PC-9 (cell line): ENCODE measurements at regions of chr7 and their contacts with region 1.

Region 1: GRCh38 chr7:74449809-74450397 is 3.8 kb upstream of the GTF2IRD1 start:
- DNase-seq: peak in 1 of 2 experiments; percentile 45
- H3K4me3 ChIP-seq: no peak overlapping the region
- H3K27ac ChIP-seq: no peak overlapping the region
- H3K4me1 ChIP-seq: peaks cover 7% of the 10 kb centered on the region
- H3K27me3 ChIP-seq: no peaks in the 10 kb centered on the region
- CTCF ChIP-seq: peak; percentile 74

Region 2: DNA sequence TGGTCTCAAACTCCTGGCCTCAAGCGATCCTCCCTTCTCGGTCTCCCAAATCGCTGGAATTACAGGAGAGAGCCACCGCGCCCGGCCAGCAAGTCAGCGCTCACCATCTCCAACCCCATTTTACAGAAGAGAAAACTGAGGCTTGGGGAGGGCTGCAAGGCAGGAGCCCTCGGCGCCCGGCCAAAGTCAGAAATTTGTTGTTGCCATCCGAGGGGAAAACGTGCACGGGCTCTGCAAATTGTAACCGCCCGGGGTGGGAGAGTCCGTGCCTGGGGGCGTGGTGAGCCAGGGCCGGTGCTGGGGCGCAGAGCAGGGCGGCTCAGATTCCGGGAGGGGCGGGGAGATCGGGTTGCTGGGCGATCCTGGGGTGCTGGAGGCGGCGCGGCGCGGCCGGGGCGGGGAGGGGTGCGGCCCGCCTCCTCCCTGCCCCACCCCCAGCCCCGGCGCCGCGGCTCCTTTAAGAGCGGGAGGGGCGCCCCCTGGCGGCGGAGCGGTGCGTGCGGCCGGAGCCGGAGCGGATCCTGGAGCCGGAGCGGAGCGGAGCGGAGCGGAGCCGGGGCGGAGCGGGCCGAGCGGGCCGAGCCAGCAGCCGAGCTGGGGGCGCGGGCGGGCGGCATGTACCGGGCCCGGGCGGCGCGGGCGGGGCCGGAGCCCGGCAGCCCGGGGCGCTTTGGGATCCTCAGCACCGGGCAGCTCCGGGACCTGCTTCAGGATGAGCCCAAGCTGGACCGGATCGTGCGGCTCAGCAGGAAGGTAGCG is 782.4 kb before region 1 on chr7 and contains the start of gene VPS37D:
- CTCF ChIA-PET with region 1: no interaction called
- POLR2A ChIA-PET with region 1: no interaction called
- intact Hi-C with region 1: no loop called
- DNase-seq: peak; percentile 69 to 97
- H3K4me3 ChIP-seq: peak within 1 kb of the TSS; percentile 40; the same call in 1 of the 2 replicates
- H3K27ac ChIP-seq: no peak within 1 kb of the TSS
- H3K4me1 ChIP-seq: 0 out of 2 replicates have a peak, but pooled peaks cover 4% of the 10 kb centered on the region
- H3K27me3 ChIP-seq: no peaks in the 10 kb centered on the region
- CTCF ChIP-seq: peak; percentile 50; the same call in 1 of the 2 replicates
- total RNA-seq, gene VPS37D: 8.3 and 12.4 TPM in 2 replicates

Region 3: GRCh38 chr7:74395745-74396311 is 54.1 kb before region 1 on chr7:
- CTCF ChIA-PET with region 1: no interaction called
- POLR2A ChIA-PET with region 1: no interaction called
- intact Hi-C with region 1: no loop called
- DNase-seq: no peak
- H3K4me3 ChIP-seq: no peak overlapping the region
- H3K27ac ChIP-seq: no peak overlapping the region
- H3K4me1 ChIP-seq: no peaks in the 10 kb centered on the region
- H3K27me3 ChIP-seq: no peaks in the 10 kb centered on the region
- CTCF ChIP-seq: no peak

Region 4: GRCh38 chr7:74439546-74439945 is 10.4 kb before region 1 on chr7:
- CTCF ChIA-PET with region 1: interaction called, 10 read pairs
- POLR2A ChIA-PET with region 1: no interaction called
- intact Hi-C with region 1: no loop called
- DNase-seq: no peak
- H3K4me3 ChIP-seq: no peak overlapping the region
- H3K27ac ChIP-seq: no peak overlapping the region
- H3K4me1 ChIP-seq: no peaks in the 10 kb centered on the region
- H3K27me3 ChIP-seq: no peaks in the 10 kb centered on the region
- CTCF ChIP-seq: no peak

Region 5: GRCh38 chr7:74505471-74506324 is 55.8 kb after region 1 on chr7:
- CTCF ChIA-PET with region 1: no interaction called
- POLR2A ChIA-PET with region 1: no interaction called
- intact Hi-C with region 1: no loop called
- DNase-seq: no peak
- H3K4me3 ChIP-seq: no peak overlapping the region
- H3K27ac ChIP-seq: no peak overlapping the region
- H3K4me1 ChIP-seq: no peaks in the 10 kb centered on the region
- H3K27me3 ChIP-seq: no peaks in the 10 kb centered on the region
- CTCF ChIP-seq: no peak

Region 6: DNA sequence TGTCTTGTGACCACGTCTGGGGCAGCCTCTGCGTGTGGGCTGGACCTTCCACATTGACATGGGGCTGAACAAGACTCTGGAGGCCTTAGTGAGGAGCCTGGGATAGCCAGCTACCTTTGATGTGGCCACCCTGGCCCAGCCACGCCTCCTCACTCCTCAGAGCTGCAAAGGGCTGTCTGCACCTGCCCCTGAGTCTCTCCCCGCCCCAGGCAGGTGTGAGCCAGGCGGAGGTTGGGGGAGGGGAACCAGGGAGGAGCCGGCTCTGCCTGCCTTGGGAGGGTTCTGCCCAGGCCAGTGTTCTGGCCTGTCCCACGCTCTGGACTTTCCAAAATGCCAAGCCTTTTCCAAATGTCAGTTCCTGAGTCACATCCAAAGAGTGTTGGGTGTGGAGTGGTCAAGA is 76.0 kb after region 1 on chr7:
- CTCF ChIA-PET with region 1: no interaction called
- POLR2A ChIA-PET with region 1: no interaction called
- intact Hi-C with region 1: no loop called
- DNase-seq: peak in 1 of 2 experiments; percentile 31
- H3K4me3 ChIP-seq: no peak overlapping the region
- H3K27ac ChIP-seq: no peak overlapping the region
- H3K4me1 ChIP-seq: no peaks in the 10 kb centered on the region
- H3K27me3 ChIP-seq: no peaks in the 10 kb centered on the region
- CTCF ChIP-seq: no peak

Region 7: DNA sequence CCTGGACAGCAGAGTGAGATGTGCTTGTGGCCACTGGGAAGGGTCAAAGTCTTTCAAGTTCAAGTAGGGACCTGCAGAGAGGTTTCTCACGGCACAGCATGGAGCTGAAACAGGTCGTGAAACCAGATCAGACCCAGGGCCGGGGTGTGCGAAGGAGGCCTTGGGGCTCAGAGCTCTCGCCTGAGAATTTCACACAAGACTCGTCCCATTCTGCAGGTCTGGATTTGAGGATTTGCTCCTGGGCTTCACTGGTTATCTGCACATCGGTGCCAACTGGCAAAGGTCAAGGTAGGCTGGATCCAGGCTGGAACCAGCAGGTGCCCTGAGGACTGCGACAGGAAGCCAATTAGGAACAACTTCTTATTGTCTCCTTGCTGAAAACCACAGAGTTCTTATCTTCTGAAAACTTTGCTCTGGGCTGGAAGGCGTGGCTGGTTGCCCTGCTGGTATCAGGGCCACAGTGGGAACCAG is 183.6 kb after region 1 on chr7:
- CTCF ChIA-PET with region 1: no interaction called
- POLR2A ChIA-PET with region 1: no interaction called
- intact Hi-C with region 1: loop called (anchors 5 kb)
- DNase-seq: peak; percentile 63
- H3K4me3 ChIP-seq: no peak overlapping the region
- H3K27ac ChIP-seq: peak overlapping the region; percentile 13; the same call in 1 of the 2 replicates
- H3K4me1 ChIP-seq: peaks cover 32% of the 10 kb centered on the region
- H3K27me3 ChIP-seq: no peaks in the 10 kb centered on the region
- CTCF ChIP-seq: no peak